Dorsolateral prefrontal cortex (tissue), 120 donors: ENCODE measurements at regions of chr2 and their contacts with region 1.

Region 1: GRCh38 chr2:27102329-27102728 is 15.8 kb downstream of the KHK start:
- DNase-seq: no peak
- H3K4me3 ChIP-seq: no peak overlapping the region
- H3K27ac ChIP-seq: no peak overlapping the region
- H3K27me3 ChIP-seq: no peaks in the 10 kb centered on the region
- CTCF ChIP-seq: no peak

Region 2: DNA sequence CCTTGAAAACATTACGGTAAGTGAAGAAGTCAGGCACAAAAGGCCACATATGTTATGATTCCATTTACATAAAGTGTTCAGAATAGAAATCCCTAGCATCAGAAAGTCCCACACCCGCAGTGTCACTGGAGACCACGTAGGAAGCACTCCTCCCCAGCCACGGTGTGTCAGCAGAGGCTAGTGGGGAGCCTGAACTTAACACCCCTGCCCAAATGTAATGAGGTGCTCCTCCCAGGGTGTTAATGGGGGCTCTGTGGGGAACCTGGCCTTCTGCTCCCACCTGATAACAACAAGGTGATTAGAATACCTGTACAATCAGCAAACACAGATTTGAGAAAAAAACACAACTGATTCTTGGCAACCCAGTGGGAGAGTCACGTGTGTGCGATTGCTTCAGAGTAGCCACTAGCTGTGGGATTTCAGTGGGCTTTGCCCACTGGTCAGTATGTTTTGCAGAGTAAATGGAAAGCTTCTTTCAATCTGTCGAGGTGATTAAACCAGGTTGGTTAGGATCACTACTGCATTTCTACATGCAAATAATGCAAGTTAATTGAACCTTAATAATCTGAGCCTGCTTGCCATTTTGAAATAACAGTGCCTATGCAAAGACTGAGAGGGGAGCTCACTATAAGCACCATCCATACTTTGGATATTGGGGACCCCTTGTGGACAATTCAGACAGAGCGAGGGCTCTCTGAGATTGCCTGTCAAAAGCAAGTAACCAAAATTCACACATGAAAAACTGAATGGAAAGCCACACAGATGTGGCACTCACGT is 88.9 kb after region 1 on chr2:
- intact Hi-C with region 1: loop called (anchors 2 to 5 kb)
- DNase-seq: peak in 5 of 10 donors; percentile 20 to 74 (median 41)
- H3K4me3 ChIP-seq: no peak overlapping the region
- H3K27ac ChIP-seq: no peak overlapping the region
- H3K27me3 ChIP-seq: no peaks in the 10 kb centered on the region
- CTCF ChIP-seq: peak in 55 of 56 donors; percentile 42 to 81 (median 67)

Region 3: DNA sequence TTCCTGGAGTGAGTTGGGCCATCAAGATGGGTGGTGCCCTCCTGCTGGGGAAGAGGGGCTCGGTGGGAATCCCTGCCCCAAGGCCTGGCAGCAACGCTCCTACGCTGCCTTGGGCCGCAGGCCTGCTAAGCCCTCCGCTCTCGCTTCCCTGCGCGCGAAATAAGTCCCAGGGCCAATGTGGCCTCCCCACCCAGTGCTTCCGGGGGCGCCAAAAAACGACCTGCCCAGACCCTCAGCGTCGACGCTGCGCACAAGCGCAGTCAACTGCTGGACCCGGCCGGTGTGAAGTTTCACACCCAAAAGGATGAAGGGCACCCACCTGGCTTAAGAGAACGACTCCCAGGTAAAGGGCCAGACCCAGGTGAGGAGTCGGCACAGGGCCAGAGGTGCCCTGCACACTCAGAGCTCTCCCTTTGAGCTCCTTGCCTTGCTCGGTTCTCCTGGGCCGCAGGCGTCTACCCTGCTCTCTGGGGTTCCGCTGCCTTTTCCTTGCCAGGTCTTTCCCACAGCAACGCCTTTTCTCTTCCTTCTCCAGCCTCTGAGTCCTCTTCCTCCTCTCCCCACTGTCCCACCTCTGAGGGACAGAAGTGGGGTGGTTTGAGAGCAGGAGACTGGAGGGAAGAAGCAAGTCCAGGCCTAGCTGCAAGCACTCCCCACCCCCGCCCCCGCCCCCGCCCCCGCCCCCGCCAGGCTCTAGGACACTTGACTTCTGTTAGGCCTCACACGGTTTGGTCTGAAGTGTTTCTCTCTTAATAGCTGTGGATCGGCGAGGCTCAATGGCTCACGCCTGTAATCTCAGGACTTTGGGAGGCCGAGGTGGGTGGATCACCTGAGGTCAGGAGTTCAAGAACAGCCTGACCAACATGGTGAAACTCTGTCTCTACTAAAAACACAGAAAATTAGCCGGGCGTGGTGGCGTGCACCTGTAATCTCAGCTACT is 173.2 kb after region 1 on chr2 and contains the start of gene DNAJC5G:
- intact Hi-C with region 1: loop called (anchors 5 kb)
- DNase-seq: peak in 1 of 10 donors; percentile 20
- H3K4me3 ChIP-seq: no peak within 1 kb of the TSS
- H3K27ac ChIP-seq: no peak within 1 kb of the TSS
- H3K27me3 ChIP-seq: peaks cover 0 to 3% (median 0%) of the 10 kb centered on the region in 45 donors
- CTCF ChIP-seq: no peak
- total RNA-seq, gene DNAJC5G: 2.2 to 19.1 (median 7.4) TPM

Region 4: GRCh38 chr2:27303093-27304025 is 201.0 kb after region 1 on chr2:
- intact Hi-C with region 1: loop called in 1 of 2 experiments (anchors 2 kb)
- DNase-seq: peak in 4 of 10 donors; percentile 21 to 54 (median 35)
- H3K4me3 ChIP-seq: peak overlapping the region in 49 of 59 donors; percentile 12 to 58 (median 39)
- H3K27ac ChIP-seq: peak overlapping the region in 2 of 59 donors; percentile 31 to 55
- H3K27me3 ChIP-seq: peaks cover 0 to 28% (median 3%) of the 10 kb centered on the region in 45 donors
- CTCF ChIP-seq: peak; percentile 78 to 95 (median 88)